Dorsolateral prefrontal cortex (tissue), 120 donors: ENCODE measurements at regions of chr14 and their contacts with region 1.

Region 1: DNA sequence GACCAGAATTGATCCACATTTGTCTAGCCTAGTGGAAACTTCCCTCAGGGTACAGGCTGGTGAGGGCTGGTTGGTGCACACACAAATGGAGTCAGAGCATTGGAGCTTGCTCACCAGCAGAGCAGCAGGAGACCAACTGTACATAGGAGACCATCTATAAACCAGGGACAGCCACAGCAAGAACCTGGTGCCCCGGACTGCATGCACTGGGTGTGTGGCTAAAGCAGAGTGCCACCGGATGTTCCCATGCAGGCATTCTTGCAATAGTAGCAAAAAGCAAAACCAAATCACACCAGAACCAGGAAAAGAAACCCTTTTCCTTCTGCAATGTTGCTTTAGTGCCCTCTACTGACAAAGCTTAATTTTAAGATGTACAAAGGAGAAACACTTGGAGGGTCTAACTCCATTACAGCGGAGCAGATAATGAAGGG is 136.4 kb downstream of the MDGA2 start:
- DNase-seq: peak in 5 of 10 donors; percentile 3 to 55 (median 34)
- H3K4me3 ChIP-seq: peak overlapping the region in 24 of 59 donors; percentile 8 to 52 (median 30)
- H3K27ac ChIP-seq: peak overlapping the region in 8 of 59 donors; percentile 11 to 55 (median 30)
- H3K27me3 ChIP-seq: no peaks in the 10 kb centered on the region
- CTCF ChIP-seq: peak; percentile 25 to 81 (median 68)

Region 2: DNA sequence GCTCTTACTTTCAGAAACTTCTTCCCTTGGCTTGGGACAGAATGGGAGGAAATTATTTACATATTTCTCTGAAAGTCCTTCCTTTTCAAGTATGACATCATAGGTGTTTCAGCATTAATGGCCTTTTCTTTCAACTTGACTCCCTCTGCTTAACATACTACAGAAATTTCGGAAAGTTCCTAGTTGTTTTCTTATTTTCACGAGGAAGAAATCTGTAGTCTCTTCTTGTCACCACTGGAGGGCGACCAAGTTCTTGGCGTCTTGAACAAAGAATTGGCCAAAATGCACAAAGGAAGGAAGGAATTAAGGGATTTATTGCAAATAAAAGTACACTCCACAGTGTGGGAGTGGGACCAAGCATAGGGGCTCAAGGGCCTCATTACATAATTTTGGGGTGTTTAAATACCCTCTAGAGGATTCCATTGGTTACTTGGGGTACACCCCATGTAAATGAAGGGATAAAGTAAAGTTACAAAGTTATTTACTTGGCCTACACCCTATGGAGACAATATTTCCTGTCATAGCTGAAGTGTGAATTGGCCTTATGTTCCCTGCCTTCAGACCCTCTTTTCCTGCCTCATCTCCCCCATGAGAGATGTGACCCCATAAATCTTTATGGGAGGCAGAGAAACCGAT is 957.9 kb before region 1 on chr14:
- intact Hi-C with region 1: loop called in 1 of 2 experiments (anchors 10 kb)
- DNase-seq: peak in 1 of 10 donors; percentile 23
- H3K4me3 ChIP-seq: no peak overlapping the region
- H3K27ac ChIP-seq: no peak overlapping the region
- H3K27me3 ChIP-seq: no peaks in the 10 kb centered on the region
- CTCF ChIP-seq: peak; percentile 34 to 72 (median 59)